Activated B cell treated with CpG ODN at 0.5 μM for 24 hours (primary cell): ENCODE measurements at regions of chr3 and their contacts with region 1.

Region 1: GRCh38 chr3:139389458-139390209 is at the start of gene COPB2:
- DNase-seq: peak; percentile 99
- ATAC-seq: peak; percentile 96
- H3K4me3 Mint-ChIP-seq: peak within 1 kb of the TSS; percentile 91
- H3K27ac Mint-ChIP-seq: peak within 1 kb of the TSS; percentile 94
- H3K4me1 Mint-ChIP-seq: peaks cover 45% of the 10 kb centered on the region
- H3K27me3 Mint-ChIP-seq: no peaks in the 10 kb centered on the region
- CTCF ChIP-seq: no peak
- total RNA-seq, gene COPB2: 87.0 and 91.4 TPM in 2 replicates

Region 2: GRCh38 chr3:138834359-138835212 is 555.0 kb before region 1 on chr3 and contains the start of gene PIK3CB:
- CTCF ChIA-PET with region 1: no interaction called
- POLR2A ChIA-PET with region 1: no interaction called
- intact Hi-C with region 1: loop called (anchors 2 kb)
- DNase-seq: peak; percentile 85
- ATAC-seq: peak; percentile 94
- H3K4me3 Mint-ChIP-seq: peak within 1 kb of the TSS; percentile 92
- H3K27ac Mint-ChIP-seq: peak within 1 kb of the TSS; percentile 95
- H3K4me1 Mint-ChIP-seq: peaks cover 24% of the 10 kb centered on the region
- H3K27me3 Mint-ChIP-seq: no peaks in the 10 kb centered on the region
- CTCF ChIP-seq: no peak
- total RNA-seq, gene PIK3CB: 19.9 and 21.9 TPM in 2 replicates

Region 3: GRCh38 chr3:139343895-139344856 is 45.5 kb before region 1 on chr3 and contains the start of gene MRPS22:
- CTCF ChIA-PET with region 1: no interaction called
- POLR2A ChIA-PET with region 1: interaction called, 13 read pairs
- intact Hi-C with region 1: loop called (anchors 1 kb)
- DNase-seq: peak; percentile 64
- ATAC-seq: peak; percentile 99
- H3K4me3 Mint-ChIP-seq: no peak within 1 kb of the TSS
- H3K27ac Mint-ChIP-seq: peak within 1 kb of the TSS; percentile 4
- H3K4me1 Mint-ChIP-seq: peaks cover 3% of the 10 kb centered on the region
- H3K27me3 Mint-ChIP-seq: peaks cover 16% of the 10 kb centered on the region
- CTCF ChIP-seq: no peak
- total RNA-seq, gene MRPS22: 37.0 and 44.7 TPM in 2 replicates

Region 4: DNA sequence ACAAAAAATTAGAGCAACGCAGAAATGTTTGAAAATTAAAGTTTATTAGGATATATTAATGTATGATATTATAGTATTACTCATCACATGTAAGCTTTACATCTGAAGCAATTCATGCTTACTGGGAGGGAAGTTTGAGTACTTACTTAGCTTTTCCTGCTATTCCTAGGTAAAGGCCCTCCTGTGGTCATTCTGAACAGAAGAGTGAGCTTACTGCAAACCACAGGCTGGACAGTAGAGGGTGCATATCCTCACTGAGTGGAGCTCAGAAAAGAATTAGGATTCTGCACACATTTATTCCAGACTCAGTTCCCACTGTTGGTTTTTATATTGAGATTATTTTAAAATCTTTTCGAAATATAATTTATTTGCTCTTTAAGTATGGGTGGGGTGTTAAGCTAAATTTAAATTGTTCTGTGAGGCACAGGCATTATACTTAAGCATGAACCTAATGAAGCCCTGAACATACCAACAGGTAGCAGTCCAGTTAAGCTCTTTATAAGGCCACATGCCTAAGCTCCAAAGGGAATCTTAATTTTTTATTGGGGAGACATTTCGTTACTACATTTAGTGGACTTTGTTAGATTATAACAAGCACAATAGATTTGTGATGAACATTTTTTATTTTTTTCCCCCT is 35.6 kb before region 1 on chr3:
- CTCF ChIA-PET with region 1: no interaction called
- POLR2A ChIA-PET with region 1: interaction called, 10 read pairs
- intact Hi-C with region 1: no loop called
- DNase-seq: no peak
- ATAC-seq: peak; percentile 45
- H3K4me3 Mint-ChIP-seq: no peak overlapping the region
- H3K27ac Mint-ChIP-seq: no peak overlapping the region
- H3K4me1 Mint-ChIP-seq: peaks cover 2% of the 10 kb centered on the region
- H3K27me3 Mint-ChIP-seq: no peaks in the 10 kb centered on the region
- CTCF ChIP-seq: no peak

Region 5: DNA sequence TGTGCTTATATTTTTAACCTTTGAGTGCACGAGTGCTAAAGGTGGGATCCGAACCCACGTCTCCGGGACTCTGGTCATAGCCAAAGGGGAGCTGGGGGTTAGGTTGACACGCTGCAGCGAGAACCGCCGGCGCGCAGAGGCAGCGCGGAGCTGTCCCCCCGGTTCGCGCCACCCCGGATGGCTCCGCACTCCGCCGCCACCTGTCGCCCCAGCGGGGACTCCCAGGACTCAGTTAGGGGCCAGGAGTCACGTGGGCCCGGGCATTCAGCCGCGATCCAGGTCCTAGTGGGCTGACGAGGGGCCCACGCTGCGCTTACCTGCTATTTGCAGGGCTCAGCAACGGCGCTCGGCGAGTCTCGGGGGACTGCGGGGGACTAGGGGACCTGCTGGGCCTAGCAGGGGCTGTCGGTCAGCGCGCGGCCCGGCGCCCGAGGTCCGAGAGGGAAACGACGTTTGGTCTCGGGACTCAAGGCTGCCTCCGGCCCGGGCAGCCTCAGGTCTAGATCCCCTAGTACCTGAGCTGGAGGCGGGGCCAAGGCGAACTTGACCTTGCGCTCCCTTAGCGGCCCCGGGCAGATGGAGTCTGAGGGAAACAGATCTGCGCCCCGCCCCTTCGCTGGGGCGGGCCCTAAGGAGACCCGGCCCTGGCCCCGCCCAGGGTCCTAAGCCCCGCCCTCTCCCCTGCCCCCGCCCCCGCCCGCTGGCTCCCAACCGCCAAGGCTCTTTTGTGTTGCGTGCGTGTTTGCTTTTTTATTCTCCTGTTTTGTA is 287.9 kb after region 1 on chr3 and contains the start of gene NMNAT3:
- CTCF ChIA-PET with region 1: no interaction called
- POLR2A ChIA-PET with region 1: no interaction called
- intact Hi-C with region 1: loop called (anchors 1 kb)
- DNase-seq: peak; percentile 69
- ATAC-seq: peak; percentile 100
- H3K4me3 Mint-ChIP-seq: peak within 1 kb of the TSS; percentile 82
- H3K27ac Mint-ChIP-seq: peak within 1 kb of the TSS; percentile 14
- H3K4me1 Mint-ChIP-seq: peaks cover 10% of the 10 kb centered on the region
- H3K27me3 Mint-ChIP-seq: peaks cover 6% of the 10 kb centered on the region
- CTCF ChIP-seq: no peak
- total RNA-seq, gene NMNAT3: 1.1 TPM in 2 replicates